Uterus (tissue), 4 donors: ENCODE measurements at regions of chr3 and their contacts with region 1.

Region 1: DNA sequence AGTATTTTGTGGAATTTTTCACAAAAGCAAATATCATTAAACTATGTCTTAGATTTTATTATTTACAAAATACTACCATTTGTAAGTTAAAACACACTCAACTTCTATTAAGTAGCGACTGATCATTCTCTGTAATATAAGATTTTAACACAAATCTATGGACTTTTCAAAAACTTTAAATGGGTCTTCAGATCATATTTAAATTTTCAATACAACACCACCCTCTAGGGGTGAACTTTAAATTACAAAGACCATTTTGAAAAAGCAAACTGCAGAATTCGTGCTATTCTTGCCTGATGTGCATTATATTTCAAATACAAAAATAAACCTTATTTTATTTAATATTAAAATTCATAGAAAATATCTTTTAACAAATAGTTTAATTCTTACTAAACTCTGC is 8.2 kb upstream of the VGLL4 start:
- DNase-seq: no peak
- H3K4me3 ChIP-seq: no peak overlapping the region
- H3K27ac ChIP-seq: no peak overlapping the region
- H3K4me1 ChIP-seq: no peaks in the 10 kb centered on the region
- H3K27me3 ChIP-seq: no peaks in the 10 kb centered on the region
- CTCF ChIP-seq: peak; percentile 44 to 63 (median 54)
- POLR2A ChIP-seq: no peak

Region 2: DNA sequence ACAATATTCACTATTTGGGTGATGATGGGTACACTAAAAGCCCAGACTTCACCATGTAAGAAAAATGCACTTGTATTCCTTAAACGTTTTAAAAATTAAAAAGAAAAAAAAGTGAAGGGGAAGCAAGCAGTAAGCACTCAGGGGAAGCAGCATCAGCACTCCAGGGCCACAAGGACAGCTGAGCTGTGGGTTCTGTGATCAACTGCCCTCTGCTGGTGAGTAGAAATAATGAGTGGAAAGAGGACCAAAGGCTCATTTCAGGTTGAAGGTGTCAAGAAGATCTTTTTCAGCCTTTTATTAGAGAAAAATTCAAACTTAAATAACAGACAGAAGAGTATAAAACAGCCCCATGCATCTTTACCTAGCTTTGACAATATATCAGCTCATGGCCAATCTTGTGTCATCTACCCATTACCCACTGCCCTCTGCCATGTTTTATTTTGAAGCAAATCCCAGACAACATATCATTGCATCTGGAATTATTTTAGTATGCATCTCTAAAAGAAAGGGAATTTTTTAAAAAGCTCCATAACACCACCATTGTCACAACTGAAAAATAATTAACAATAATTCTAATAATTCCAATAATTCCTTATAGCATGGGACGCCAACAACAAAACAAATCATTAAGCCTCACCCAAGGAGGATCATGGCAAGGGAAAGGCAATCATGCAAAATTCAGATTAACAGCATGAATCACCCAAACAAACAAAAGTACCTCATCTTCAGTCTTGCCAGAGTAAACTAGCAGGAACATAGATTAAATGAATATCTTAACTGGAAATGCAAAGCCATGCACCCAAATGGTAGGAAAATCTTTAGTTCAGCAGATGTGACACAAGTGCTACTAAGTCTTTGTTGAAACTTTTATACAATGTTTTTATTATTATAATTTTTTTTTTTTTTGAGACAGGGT is 152.3 kb after region 1 on chr3:
- intact Hi-C with region 1: loop called (anchors 10 kb)
- DNase-seq: peak in 1 of 2 donors; percentile 46
- H3K4me3 ChIP-seq: no peak overlapping the region
- H3K27ac ChIP-seq: no peak overlapping the region
- H3K4me1 ChIP-seq: no peaks in the 10 kb centered on the region
- H3K27me3 ChIP-seq: no peaks in the 10 kb centered on the region
- CTCF ChIP-seq: peak; percentile 62 to 74 (median 70)
- POLR2A ChIP-seq: no peak

Region 3: DNA sequence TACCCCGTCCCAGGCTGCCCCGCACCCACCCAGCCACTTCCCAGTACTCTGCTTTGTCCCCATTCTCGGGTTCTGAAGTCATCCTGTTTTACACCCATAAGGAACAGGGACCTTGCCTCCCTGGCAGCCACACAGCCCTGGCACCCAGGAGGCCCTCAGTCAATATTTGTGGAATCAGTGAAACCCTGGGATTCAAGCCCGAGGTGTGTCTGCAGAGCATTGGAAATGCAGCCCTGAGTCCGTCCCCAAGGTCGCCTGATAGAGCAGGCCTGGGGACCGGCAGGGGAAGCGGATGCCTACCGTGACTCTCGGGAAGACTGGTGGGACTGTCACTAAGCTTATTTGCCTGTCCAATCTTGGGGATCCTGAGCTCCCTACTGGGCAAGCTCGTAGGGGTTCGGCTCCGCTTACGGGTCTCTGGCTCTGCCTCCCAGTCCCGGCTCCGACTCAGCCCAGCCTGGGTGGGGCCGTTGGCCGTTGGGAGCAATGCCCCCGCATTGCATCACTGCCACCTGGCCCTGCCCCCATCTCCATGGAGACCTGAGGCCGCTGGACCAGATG is 259.2 kb after region 1 on chr3:
- intact Hi-C with region 1: no loop called
- DNase-seq: no peak
- H3K4me3 ChIP-seq: no peak overlapping the region
- H3K27ac ChIP-seq: no peak overlapping the region
- H3K4me1 ChIP-seq: no peaks in the 10 kb centered on the region
- H3K27me3 ChIP-seq: no peaks in the 10 kb centered on the region
- CTCF ChIP-seq: no peak
- POLR2A ChIP-seq: no peak